ENCODE measurements at regions of chr22 and their contacts with region 1.

Region 1: DNA sequence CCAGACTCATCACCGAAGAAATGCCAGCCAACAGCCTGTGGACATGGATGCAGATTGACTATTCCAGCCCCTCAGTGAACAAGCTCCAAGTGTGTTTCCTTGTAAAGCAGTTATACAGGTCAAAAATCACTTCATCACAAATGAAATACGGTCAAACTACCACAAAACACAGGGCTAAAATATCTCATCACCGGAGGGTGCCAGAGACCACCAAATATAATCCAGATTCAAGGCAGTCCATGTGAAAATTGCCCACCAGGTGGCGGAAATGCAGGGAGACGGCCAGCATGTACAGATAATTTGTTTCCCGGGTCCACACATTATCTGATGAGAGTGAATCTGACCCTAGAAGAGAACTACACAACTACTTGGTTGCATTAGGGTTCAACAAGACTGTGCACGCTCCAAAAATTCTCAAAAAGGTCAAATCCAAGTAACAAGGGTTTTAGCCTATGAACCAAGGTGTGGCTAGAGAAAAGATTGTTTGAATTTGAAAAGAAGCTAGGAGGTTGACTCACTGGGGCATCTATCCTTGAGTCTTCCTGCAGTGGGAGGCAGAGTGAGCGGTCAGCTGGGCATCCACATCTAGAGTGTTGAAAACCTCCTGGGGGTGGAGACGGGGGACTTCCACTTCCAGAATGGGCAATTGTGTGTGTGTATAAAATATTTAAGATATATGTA is 71.7 kb downstream of the IGLL5 start:
- DNase-seq: no peak

Region 2: DNA sequence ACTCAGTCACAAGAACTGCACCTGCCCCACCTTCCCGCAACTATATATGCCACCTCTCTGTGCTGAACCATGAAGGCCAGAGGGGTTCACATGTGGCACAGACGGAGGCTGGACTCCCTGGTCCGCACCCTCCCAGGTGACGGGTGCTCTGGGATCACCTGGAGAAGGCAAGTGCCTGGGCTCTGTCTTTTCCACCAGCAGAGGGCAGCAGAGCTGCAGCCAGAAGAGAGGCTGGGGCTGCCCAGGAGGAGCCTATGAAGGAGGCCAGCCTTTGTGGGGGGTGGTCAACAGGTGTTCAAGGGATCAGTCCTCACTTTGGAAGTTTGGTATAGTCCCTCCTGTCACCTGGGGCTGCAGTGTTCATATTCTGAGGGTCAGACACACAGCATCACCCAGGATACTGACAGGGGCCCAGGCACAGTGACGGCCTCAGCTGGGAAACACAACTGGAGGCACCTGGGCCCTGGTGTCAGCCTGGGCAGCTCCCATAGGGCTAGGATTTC is 110.9 kb before region 1 on chr22:
- intact Hi-C with region 1: loop called (anchors 5 kb)
- DNase-seq: no peak

Region 3: GRCh38 chr22:22942511-22943329 is 16.6 kb before region 1 on chr22:
- intact Hi-C with region 1: no loop called
- DNase-seq: peak; percentile 78

Region 4: DNA sequence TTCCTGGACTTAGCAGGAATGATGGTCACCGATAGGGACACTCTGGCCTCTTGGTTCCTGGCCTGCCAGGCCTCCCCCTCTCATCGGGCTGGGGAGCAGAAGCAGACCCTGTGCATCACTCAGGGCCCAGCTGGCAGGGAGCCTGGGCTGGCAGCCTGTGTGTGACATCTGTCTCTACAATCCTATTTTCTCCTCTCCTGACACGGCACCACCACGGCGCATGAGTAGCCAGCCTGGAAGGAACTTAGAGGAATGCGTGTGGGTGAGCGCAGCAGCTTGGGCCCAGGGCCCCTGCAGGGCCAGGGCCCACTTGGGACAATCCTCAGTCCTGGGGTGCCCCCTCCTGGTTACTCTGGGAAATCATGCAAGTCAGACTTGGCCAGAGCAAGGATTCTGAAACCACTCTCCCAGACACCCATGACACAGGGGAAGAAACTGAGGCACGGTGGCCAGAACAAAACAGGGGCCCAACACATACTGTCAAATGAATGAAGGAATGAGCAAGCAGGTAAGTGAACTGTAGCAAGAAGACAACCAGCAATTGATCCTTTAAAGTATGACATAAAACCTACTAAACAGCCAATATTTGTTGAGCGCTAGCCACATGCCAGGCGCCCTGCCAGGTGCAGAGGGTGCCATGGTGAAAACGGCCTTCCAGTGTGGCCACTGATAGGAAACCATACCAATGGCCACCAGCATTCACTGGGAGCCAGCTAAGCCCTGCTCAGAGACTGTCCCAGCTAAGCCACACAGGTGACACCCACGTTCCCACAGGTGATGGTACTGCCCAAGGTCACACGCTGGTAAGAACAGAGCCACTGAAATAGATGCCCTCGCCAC is 169.2 kb after region 1 on chr22:
- intact Hi-C with region 1: loop called (anchors 1 kb)
- DNase-seq: no peak

Region 5: DNA sequence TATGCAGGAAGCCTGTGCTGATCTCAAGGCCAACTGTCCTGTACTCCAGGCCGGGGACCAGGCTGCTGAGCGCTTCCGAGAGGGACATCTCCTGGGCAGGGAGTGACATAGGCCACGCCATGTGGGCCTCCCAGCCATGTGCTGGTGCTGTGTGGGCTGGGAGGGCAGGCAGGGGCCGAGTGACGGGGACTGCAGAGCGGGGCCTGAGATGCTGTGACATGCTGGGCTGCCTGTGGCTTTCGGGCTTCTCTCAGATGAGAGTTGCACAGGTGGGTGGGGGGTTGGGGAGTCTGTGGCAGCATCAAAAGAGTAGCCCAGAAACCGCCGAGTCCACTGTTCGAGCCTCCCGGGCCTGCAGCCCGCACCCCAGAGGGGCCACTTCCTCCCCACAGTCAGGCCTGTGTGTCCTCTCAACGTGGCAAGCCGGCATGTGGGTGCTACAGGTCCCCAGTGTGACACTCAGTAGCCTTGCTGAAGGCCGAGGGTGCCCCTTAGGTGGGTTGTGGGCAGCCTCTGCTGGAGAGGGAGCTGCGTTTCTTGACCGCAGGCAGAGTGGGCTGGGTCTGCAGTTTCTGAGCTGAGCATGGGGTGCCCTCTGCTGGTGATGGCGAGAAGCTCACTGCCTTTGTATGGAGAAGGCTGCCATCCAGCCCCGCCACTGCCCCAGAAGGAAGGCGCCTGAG is 322.3 kb after region 1 on chr22:
- intact Hi-C with region 1: loop called (anchors 10 kb)
- DNase-seq: peak; percentile 94

Region 6: DNA sequence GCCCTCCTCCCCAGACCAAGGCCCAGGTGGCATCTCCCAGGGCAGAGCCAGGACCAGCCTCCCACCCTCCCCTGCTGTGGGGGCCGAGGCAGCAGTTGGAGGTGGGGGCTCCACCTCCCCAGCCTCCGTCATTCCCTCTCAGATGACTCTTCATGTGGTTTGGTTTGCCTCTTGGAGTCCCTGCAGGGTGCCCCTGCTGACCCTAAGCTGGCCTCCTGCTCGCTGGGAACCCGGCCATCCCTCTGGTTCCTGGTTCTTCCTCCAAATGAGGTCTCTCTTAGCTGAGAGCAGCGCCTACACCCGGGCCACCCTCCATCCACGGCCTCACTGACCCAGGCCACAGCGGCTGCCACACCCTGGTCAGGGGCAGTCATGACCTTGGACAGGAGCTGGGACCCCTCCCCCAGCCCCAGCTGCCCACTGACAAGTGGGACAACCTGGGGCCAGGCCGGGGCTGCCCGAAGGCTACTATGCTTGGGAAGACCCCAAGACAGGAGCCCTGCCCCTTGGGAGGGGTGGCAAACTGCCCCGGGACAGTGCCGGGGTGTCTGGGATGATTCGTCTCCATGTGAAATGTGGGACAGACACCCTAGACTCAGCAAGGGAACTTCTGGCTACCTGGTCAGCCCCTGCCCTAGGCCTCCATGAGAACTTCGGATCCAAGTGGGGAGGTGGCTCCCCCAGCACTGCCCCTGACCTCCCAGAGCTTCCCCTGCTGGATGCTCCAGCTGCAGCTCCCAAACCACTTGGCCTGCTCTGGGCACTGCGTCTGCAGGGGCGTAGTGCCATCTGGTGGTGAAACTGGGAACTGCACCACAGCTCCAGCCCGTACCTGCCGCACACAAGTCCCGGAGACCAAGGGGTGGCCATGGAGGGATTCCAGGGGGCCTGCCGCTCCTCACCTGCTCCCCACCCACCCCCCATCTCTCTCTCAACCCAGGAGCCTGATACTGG is 426.3 kb after region 1 on chr22:
- intact Hi-C with region 1: loop called (anchors 2 kb)
- DNase-seq: peak; percentile 91

Measured in cardiac septum (tissue), 1 donor.